ENCODE measurements at regions of chr1 and their contacts with region 1.

Region 1: GRCh38 chr1:108643492-108644335 is 17.2 kb downstream of the HENMT1 start:
- DNase-seq: peak in 29 of 42 donors; percentile 11 to 79 (median 55)

Region 2: DNA sequence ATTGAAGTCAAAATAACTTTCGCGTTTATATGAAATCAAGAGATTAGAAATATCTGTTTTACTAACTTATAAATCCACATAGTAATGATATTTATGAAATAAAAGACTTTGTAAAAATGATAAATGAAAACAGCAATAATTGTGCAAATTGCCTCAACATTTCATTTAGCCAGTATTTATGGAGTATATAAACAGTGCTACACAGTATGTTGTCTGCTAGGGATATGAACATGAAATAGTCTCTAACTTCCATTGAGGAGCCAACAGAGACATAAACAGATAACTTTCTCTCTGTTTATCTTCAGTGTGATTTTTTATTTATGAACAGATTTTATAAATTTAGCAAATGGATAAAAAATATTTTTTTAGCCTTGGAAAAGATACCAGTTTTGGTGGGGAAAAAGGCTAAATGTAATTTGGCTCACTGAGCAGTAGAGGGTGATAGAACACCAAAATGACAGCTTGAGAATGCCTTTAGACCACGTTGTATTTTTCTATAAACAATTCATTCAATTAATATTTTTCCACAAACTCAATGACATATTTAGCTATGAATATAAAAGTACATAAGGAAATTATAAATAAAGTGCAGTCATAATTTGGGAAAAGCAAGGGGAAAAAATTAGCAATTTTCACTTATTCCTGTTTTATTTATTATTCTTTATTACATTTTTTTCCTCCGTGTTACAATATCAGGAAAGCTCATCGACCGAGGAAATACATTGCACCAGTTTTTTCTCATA is 131.3 kb before region 1 on chr1:
- intact Hi-C with region 1: loop called (anchors 5 kb)
- DNase-seq: peak in 3 of 42 donors; percentile 14 to 41 (median 21)

Region 3: DNA sequence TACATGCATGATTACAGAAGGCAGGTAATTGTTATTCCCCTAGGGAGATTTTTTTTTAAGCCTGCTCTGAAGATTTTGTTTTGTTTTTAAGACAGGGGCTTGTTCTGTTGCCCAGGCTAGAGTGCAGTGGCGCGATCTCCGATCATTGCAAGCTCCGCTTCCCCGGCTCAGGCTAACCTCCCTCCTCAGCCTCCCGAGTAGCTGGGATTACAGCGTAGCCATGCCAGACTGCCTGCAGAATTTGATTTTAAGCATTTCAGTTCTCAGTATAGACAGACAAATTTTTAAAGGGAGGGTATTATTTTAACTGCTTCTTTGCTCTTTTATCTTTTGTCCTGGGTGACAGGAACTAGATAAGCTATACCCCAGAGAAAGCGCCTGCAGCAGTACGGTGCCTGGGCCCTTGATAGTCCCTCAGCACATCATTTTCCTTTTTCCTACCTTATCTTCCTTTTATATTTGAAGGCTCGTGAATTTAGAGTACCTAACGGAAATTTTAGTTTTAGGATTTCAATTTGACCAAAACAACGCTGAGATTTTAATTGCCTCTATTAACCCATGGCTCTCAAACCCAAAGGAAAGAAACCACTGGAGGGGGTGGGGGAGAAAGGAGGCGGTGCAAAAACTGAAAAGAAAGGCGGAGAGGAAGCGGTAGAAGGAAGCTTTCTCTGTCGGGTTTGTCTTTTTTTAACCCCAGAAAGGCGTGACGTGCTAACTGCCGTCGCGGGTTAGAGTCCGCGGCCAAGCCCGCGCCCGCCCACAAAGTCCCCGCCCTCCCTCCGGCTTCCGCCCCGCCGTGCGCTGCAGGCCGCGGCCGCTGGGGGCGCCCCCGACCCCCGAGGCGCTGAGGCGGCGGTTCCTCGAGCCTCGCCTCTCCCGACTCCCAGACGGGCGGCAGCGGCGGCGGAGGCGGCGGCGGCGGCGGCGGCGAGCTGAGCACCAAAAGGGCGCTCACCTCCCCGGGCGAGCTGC is 84.2 kb before region 1 on chr1 and contains the start of gene EEIG2:
- intact Hi-C with region 1: loop called (anchors 10 kb)
- DNase-seq: peak; percentile 24 to 90 (median 82)